Dendritic cell treated with granulocyte-macrophage colony-stimulating factor and Interleukin-4, amounts not matched to agents 40 ng/mL and 50 ng/mL, for 4 days (primary cell): ENCODE measurements at regions of chr12 and their contacts with region 1.

Region 1: GRCh38 chr12:117063162-117063911 is 35.9 kb downstream of the TESC start:
- H3K4me3 Mint-ChIP-seq: peak overlapping the region; percentile 45
- H3K27ac Mint-ChIP-seq: peak overlapping the region; percentile 79
- H3K4me1 Mint-ChIP-seq: peaks cover 86% of the 10 kb centered on the region
- H3K27me3 Mint-ChIP-seq: peaks cover 1% of the 10 kb centered on the region

Region 2: GRCh38 chr12:117098361-117099217 is 35.3 kb after region 1 on chr12:
- intact Hi-C with region 1: loop called (anchors 5 kb)
- H3K4me3 Mint-ChIP-seq: peak overlapping the region; percentile 76
- H3K27ac Mint-ChIP-seq: no peak overlapping the region
- H3K4me1 Mint-ChIP-seq: peaks cover 46% of the 10 kb centered on the region
- H3K27me3 Mint-ChIP-seq: peaks cover 16% of the 10 kb centered on the region